Activated CD8-positive, alpha-beta memory T cell treated with anti-CD3 and anti-CD28 coated beads, Interleukin-2, amount 10 ng/mL, durations not matched to agents 7 days and 5 days (primary cell): ENCODE measurements at regions of chr22 and their contacts with region 1.

Region 1: GRCh38 chr22:30104501-30105156 is 24.4 kb downstream of the HORMAD2 start:
- DNase-seq: peak; percentile 49
- ATAC-seq: peak; percentile 80
- H3K4me3 Mint-ChIP-seq: peak overlapping the region; percentile 24
- H3K27ac Mint-ChIP-seq: peak overlapping the region; percentile 78
- H3K4me1 Mint-ChIP-seq: peaks cover 55% of the 10 kb centered on the region
- H3K27me3 Mint-ChIP-seq: peaks cover 2% of the 10 kb centered on the region

Region 2: DNA sequence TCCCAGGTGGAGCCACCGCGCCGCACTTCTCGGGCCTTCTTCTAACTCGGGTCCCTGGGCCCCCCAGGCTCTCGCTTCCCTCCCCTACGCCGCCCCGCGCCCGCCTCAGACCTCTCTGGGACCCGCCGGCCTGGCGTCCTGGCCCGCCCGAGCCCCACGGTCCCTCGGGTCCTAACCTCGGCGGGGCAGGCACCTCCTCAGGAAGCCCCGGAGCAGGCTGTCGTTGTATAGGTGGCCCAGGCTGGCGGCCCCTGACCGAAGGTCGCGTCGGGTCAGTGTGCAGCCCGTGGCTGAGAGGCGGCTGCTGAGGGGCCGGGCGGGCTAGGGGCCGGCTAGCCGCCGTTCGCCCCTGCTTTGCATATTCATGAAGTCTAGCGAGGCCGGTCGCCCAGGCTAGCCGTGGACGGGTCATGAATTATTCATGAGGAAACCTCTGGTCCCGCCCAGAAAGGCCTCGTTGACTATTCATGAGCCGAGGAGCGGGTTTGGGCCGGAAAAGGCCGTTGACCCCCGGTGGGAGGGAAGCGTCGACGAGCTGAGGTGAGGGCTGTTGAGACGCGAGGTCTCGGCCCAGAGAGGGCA is 24.6 kb before region 1 on chr22 and contains the start of gene HORMAD2:
- CTCF ChIA-PET with region 1: no interaction called
- DNase-seq: no peak
- ATAC-seq: no peak
- H3K4me3 Mint-ChIP-seq: no peak within 1 kb of the TSS
- H3K27ac Mint-ChIP-seq: no peak within 1 kb of the TSS
- H3K4me1 Mint-ChIP-seq: peaks cover 10% of the 10 kb centered on the region
- H3K27me3 Mint-ChIP-seq: peaks cover 20% of the 10 kb centered on the region
- total RNA-seq, gene HORMAD2: 0.09 TPM in 1 of 2 experiments, not detected in the other

Region 3: GRCh38 chr22:30121960-30122359 is 17.3 kb after region 1 on chr22:
- CTCF ChIA-PET with region 1: interaction called, 15 read pairs
- DNase-seq: no peak
- ATAC-seq: peak; percentile 63
- H3K4me3 Mint-ChIP-seq: peak overlapping the region; percentile 59
- H3K27ac Mint-ChIP-seq: peak overlapping the region; percentile 41
- H3K4me1 Mint-ChIP-seq: peaks cover 33% of the 10 kb centered on the region
- H3K27me3 Mint-ChIP-seq: peaks cover 11% of the 10 kb centered on the region

Region 4: DNA sequence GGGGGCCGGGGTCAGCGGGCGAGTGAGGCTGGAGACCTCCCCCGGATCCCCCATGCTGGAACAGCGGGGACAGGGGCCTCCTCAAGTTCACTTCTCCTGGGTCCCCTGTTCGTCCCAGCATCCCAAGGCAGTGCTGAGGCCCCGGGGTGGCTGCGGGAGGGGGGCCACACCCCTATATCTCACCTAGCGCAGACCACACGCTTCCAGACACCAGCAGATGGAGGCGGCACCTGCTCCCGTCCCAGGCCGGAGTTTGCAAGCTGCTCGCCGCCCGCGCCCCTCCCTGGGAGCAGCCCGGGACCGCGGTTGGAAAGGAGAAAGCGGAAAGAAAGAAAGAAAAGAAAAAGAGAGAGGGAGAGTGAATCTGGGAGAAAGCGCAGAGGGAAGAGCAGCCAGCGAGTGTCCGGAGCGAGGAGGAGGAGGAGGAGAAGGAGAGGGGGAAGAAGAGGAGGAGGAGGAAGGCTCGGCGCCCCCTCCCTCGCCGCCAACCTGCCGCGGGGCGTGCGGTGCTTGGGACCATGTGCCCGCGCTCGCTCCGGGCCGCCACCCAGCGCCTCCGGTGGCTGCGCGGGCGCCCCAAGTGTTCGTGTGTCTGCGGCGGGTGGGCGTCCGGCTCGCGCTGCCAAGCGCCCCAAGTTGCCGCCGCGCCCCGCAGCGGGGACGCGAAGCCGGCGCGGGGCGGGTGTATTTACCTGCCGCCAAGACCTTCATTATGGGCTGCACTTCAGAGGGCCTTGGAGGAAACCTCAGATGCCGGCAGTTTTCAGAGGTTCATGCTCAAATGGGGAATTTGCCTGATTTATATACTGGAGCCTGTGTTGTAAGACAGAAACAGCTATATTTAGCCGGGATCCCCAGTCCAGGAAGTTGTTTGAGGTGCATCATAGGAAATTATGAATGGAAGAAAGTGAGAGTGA is 141.6 kb after region 1 on chr22 and contains the start of gene LIF:
- CTCF ChIA-PET with region 1: interaction called, 23 read pairs
- DNase-seq: peak; percentile 71
- ATAC-seq: peak; percentile 74
- H3K4me3 Mint-ChIP-seq: peak within 1 kb of the TSS; percentile 92
- H3K27ac Mint-ChIP-seq: peak within 1 kb of the TSS; percentile 95
- H3K4me1 Mint-ChIP-seq: peaks cover 76% of the 10 kb centered on the region
- H3K27me3 Mint-ChIP-seq: peaks cover 3% of the 10 kb centered on the region
- total RNA-seq, gene LIF: 107 to 304 TPM

Region 5: DNA sequence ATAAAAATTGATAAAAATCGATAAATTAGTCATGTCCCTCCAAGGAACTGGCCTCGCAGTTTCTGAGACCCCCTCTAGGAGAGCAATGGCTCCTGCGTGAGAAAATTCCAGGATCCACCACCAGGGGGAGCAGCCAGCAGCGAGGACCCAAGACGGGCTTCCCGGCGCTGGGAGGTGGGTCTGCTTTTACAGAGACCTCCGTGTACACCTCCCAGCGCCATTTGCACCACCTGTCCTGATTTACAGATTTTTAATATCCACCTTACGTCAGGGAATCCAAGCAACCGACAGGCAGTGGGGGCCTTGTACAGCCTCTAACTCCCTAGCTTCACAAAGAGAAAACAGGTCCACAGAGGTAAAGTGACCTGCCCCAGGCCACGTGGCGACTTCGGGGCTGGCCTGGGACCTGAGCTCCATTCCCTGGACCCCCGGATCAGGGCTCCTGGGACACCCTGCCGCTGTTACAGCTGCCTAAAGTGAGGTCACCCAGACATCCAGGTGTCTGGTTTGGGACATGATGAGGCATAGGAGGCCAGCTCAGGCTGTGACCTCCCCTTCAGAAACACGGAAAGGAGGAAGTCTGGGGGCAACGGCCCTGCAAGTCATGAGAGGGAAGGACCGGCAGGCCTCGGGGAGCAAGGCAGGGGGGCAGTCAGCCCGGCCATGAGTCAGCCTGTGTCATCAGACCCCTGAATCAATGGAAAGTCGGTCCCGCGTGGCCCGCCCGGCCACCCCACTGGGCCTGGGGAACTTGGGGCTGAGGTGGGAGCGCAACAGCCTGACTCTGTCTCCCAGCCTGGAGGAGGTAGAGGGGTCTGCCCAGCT is 158.5 kb after region 1 on chr22:
- CTCF ChIA-PET with region 1: interaction called, 53 read pairs
- DNase-seq: peak; percentile 86
- ATAC-seq: no peak
- H3K4me3 Mint-ChIP-seq: peak overlapping the region; percentile 98
- H3K27ac Mint-ChIP-seq: peak overlapping the region; percentile 74
- H3K4me1 Mint-ChIP-seq: peaks cover 59% of the 10 kb centered on the region
- H3K27me3 Mint-ChIP-seq: no peaks in the 10 kb centered on the region